ENCODE measurements at regions of chr6 and their contacts with region 1.

Region 1: GRCh38 chr6:33430991-33431879 is 11.4 kb downstream of the SYNGAP1 start:
- DNase-seq: peak; percentile 78 to 96 (median 89)
- ATAC-seq: peak; percentile 59 to 72
- H3K4me3 Mint-ChIP-seq: peak overlapping the region; percentile 85 to 94 (median 92)
- H3K27ac Mint-ChIP-seq: peak overlapping the region; percentile 88 to 99 (median 96)
- H3K4me1 Mint-ChIP-seq: peaks cover 55 to 74% (median 64%) of the 10 kb centered on the region in 4 donors
- H3K27me3 Mint-ChIP-seq: no peaks in the 10 kb centered on the region

Region 2: GRCh38 chr6:33271458-33272274 is 159.6 kb before region 1 on chr6 and contains the starts of genes RPS18 and VPS52:
- POLR2A ChIA-PET with region 1: interaction called, 13 read pairs
- DNase-seq: peak; percentile 78 to 100 (median 94)
- ATAC-seq: peak; percentile 86 to 88
- H3K4me3 Mint-ChIP-seq: peak within 1 kb of the TSS; percentile 92 to 99 (median 96)
- H3K27ac Mint-ChIP-seq: peak within 1 kb of the TSS; percentile 99 to 100 (median 99)
- H3K4me1 Mint-ChIP-seq: peaks cover 34 to 71% (median 70%) of the 10 kb centered on the region in 4 donors
- H3K27me3 Mint-ChIP-seq: no peaks in the 10 kb centered on the region
- polyA plus RNA-seq, gene RPS18: 9,896 to 11,320 (median 11,293) TPM
- polyA plus RNA-seq, gene VPS52: 9.3 to 19.3 (median 15.2) TPM

Region 3: GRCh38 chr6:33299237-33299944 is 131.8 kb before region 1 on chr6:
- POLR2A ChIA-PET with region 1: interaction called, 14 read pairs
- DNase-seq: peak; percentile 86 to 95 (median 92)
- ATAC-seq: peak; percentile 82 to 88
- H3K4me3 Mint-ChIP-seq: peak overlapping the region; percentile 94 to 100 (median 98)
- H3K27ac Mint-ChIP-seq: peak overlapping the region; percentile 94 to 100 (median 99)
- H3K4me1 Mint-ChIP-seq: peaks cover 20 to 49% (median 43%) of the 10 kb centered on the region in 4 donors
- H3K27me3 Mint-ChIP-seq: peaks cover 0 to 2% (median 0%) of the 10 kb centered on the region in 5 donors

Region 4: GRCh38 chr6:33344701-33345697 is 86.2 kb before region 1 on chr6:
- POLR2A ChIA-PET with region 1: interaction called, 30 read pairs
- DNase-seq: peak; percentile 46 to 88 (median 74)
- ATAC-seq: peak; percentile 56 to 64
- H3K4me3 Mint-ChIP-seq: peak overlapping the region; percentile 73 to 91 (median 84)
- H3K27ac Mint-ChIP-seq: peak overlapping the region; percentile 91 to 99 (median 96)
- H3K4me1 Mint-ChIP-seq: peaks cover 28 to 54% (median 48%) of the 10 kb centered on the region in 4 donors
- H3K27me3 Mint-ChIP-seq: no peaks in the 10 kb centered on the region

Region 5: DNA sequence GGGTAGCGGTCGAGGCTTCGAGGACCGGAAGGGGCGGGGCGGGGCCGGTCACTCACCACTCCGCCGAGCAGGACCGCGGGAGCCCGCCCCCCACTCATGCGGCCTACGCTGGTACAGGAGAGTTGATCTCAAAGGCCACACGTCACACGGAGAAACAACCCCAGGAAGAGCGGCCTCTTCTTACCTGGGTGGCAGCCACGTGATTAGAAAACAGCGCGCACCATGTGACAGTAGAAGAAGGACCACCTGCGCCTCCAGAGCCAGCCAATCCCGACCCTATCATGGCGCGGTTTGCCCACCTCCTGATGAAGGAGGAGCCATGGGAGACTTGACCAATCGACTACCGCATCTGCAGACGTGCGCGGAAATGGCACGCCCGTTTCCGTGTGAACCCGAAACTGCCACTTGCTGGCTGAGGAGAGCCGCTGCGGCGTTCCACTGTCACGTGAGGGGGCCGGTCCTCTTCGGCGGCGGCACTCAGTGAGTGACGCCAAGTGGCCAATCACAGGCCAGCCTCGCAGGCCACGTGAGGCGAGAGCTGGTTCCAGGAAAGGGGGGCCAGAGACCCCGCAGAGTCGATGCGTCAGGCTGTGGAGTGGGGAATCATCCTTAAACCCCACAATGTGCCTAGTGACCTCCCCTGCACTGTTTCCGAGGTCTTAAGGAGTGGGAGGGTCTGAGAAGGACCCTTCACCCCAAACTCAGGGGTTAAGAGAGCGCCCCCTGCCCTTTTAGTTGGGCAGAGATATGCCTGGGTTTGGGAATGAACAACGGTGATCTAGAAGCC is 13.1 kb before region 1 on chr6 and contains the start of gene CUTA:
- POLR2A ChIA-PET with region 1: interaction called, 58 read pairs
- DNase-seq: peak; percentile 93 to 100 (median 99)
- ATAC-seq: peak; percentile 90
- H3K4me3 Mint-ChIP-seq: peak within 1 kb of the TSS; percentile 90 to 95 (median 92)
- H3K27ac Mint-ChIP-seq: peak within 1 kb of the TSS; percentile 98 to 100 (median 99)
- H3K4me1 Mint-ChIP-seq: peaks cover 49 to 94% (median 80%) of the 10 kb centered on the region in 4 donors
- H3K27me3 Mint-ChIP-seq: no peaks in the 10 kb centered on the region
- polyA plus RNA-seq, gene CUTA: 338 to 441 (median 385) TPM

Region 6: DNA sequence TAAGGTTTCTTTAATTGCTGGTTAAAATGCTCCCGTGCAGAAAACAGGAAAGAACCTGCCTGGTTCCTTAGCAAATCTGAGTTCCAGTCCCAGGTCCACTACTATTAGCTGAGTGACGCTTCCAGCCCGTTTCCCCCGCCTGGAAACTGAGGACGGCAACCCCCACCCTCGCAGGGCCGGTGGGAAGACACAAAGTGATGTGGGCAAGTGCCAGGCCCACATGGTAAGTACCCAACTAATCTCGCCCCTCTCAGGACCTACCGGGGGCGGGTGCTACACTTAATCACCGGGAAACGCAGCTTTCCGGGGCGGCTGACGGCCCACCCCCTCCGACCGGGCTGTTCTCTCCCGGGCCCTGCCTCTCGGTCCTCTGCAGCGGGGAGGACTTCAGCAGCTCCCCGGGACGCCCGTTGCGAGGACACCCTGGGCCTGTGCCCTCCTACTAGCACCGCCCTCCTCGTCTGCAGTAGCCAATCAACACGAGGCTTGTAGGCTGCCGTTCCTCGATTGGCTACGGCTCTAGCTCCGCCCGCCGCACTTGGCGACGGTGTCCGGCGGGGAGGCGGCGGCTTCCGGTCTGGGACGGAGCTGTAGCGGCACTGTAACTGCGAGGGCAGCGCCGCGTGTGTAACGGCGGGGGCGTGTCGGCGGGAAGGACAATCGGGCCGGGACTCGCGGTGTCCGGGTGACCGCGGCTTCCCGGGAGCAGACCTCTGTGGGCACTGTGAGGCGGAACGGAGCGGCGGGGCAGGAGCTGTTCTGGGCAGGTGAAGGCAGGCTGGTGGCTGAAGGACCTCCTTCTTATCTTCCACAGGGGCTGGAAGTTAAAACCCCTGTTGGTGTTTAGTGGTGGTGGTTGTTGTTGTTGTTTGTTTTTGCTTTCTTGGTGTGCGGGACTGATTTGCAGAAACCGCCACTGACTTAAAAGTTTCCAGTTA is 23.0 kb after region 1 on chr6 and contains the start of gene ZBTB9:
- POLR2A ChIA-PET with region 1: interaction called, 52 read pairs
- DNase-seq: peak; percentile 87 to 96 (median 92)
- ATAC-seq: peak; percentile 97 to 99
- H3K4me3 Mint-ChIP-seq: peak within 1 kb of the TSS; percentile 91 to 100 (median 94)
- H3K27ac Mint-ChIP-seq: peak within 1 kb of the TSS; percentile 63 to 99 (median 96)
- H3K4me1 Mint-ChIP-seq: peaks cover 31 to 69% (median 43%) of the 10 kb centered on the region in 4 donors
- H3K27me3 Mint-ChIP-seq: no peaks in the 10 kb centered on the region
- polyA plus RNA-seq, gene ZBTB9: 3.7 to 10.4 (median 6.4) TPM

Region 7: DNA sequence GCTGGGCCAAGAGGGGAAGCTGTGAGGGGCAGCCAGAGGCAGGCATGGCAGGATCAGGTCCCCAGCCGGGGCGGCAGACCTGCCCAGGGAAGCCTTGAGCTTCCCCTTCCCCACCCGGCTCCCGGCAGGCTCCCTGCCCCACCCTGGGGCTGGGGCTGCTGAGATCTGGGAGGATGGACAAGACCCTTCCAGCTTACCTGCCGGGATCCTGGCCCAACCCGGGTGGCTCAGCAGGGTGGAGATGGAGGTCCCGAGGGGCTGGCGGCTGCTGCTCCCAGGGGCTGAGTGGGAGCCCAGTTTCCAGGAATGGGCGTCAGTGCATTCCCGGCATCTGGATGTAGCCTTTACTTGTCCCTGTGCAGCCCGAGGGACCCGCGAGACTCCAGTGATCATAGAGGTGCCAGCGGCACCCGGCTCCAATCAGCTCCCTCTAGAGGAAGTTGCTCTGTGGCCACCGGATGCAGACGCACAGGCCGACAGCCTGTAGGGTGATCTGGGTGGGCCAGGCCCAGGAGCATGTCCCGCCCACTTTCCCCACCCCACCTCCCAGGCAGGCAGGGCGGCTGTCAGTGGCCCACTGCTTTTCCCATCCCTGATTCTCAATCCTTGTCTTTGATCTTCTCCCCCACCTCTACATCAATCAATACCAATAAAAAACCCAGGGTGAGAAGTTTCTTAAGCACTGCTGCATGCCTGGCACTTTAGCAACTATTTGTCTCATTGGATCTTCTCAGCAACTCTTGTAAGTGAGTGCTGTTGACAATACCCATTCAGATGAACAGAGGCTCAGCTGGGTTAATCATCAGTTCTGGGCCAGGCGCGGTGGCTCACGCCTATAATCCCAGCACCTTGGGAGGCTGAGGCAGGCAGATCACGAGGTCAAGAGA is 148.8 kb after region 1 on chr6 and contains the start of gene BAK1:
- POLR2A ChIA-PET with region 1: interaction called, 20 read pairs
- DNase-seq: peak; percentile 73 to 92 (median 80)
- ATAC-seq: peak; percentile 96 to 98
- H3K4me3 Mint-ChIP-seq: peak within 1 kb of the TSS; percentile 90 to 97 (median 94)
- H3K27ac Mint-ChIP-seq: peak within 1 kb of the TSS; percentile 94 to 99 (median 98)
- H3K4me1 Mint-ChIP-seq: peaks cover 16 to 43% (median 40%) of the 10 kb centered on the region in 4 donors
- H3K27me3 Mint-ChIP-seq: no peaks in the 10 kb centered on the region
- polyA plus RNA-seq, gene BAK1: 11.8 to 20.9 (median 13.2) TPM